ENCODE measurements at regions of chr20 and their contacts with region 1.

Region 1: DNA sequence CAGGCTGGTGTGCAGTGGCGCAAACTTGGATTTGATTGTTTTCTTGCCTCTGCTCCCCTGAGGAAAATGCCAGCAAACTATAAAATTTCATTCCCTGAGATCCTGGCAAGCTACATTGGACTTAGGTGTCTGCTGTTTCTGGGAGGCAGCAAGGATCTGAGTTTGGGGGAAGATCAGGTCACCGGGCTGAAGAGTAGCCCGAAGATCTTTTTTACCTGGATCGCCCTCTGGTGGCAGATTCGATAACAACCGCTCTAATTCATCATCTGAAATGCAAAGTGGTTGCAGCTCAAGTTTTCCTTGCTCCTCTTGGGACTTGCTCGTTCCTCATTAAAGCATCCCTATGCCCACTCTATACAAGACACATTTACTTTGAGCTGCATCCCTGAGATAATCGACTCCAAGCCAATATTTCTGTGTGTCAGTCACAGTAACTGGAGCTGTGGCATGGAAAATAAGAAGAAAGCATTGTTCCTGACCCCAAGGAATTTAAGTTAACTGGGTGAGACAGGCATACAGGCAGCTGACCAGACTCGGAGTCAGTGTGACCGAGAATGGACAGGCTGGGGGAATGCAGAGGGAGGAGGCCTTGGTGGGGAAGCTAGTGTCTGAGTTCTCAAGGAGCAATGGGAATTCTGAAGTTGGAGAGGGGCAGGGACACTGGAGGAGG is 131.8 kb upstream of the PROKR2 start:
- DNase-seq: peak; percentile 37 to 82 (median 52)
- H3K4me3 ChIP-seq: no peak overlapping the region
- H3K27ac ChIP-seq: no peak overlapping the region
- H3K4me1 ChIP-seq: no peaks in the 10 kb centered on the region
- H3K27me3 ChIP-seq: peaks cover 18% of the 10 kb centered on the region
- CTCF ChIP-seq: peak; percentile 43 to 65 (median 56)
- POLR2A ChIP-seq: no peak

Region 2: DNA sequence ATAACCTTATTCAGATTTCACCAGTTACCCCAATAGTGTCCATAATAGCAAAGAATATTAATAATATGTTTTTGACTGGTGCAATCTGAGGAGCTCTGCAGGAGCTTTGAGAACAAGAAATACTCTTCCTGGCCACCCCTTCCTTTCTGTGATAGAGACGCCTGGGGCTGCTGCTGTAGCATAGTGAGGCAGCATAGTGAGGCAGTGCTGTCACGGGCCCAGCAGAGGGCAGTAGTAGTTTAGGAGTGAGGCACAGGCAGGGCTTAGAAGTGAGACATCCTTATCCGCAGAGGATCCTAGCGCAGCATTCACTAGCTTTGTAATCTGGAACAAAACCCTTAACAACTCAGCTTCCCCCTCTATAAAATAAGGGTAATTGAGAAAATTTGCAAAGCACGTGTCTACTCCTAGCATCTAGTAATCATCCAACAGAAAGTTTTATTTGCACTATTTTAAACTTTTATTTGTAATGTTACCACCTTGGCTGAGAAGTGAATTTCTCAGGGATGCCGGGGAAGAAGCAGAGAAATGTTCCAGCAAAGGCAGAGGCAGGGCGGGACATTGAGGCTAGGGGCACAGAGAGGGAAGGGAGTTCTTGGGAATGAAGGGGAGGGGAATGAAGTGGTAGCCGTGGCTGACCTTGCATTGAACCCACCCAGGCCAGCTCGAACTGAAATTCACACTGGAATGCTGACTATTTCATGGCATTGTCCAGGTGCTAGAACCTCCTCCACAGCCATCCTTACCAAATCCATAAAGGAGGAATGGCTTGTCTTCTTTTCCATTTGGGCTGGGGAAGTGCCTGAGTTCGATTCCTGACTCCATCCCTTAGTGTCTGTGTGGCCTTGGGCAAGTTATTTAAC is 243.0 kb before region 1 on chr20:
- intact Hi-C with region 1: loop called in 1 of 2 experiments (anchors 5 kb)
- DNase-seq: peak; percentile 71 to 89 (median 77)
- H3K4me3 ChIP-seq: no peak overlapping the region
- H3K27ac ChIP-seq: no peak overlapping the region
- H3K4me1 ChIP-seq: no peaks in the 10 kb centered on the region
- H3K27me3 ChIP-seq: no peaks in the 10 kb centered on the region
- CTCF ChIP-seq: peak; percentile 70 to 86 (median 76)
- POLR2A ChIP-seq: no peak